Mammary epithelial cell (primary cell): ENCODE measurements at regions of chr17 and their contacts with region 1.

Region 1: GRCh38 chr17:82292251-82293154 is 19.0 kb upstream of the CSNK1D start:
- DNase-seq: peak; percentile 96
- H3K4me3 ChIP-seq: peak overlapping the region; percentile 70 to 97 (median 71)
- H3K27ac ChIP-seq: peak overlapping the region; percentile 76
- H3K4me1 ChIP-seq: peaks cover 28% of the 10 kb centered on the region
- H3K27me3 ChIP-seq: no peaks in the 10 kb centered on the region
- CTCF ChIP-seq: no peak

Region 2: GRCh38 chr17:81911277-81911961 is 381.1 kb before region 1 on chr17 and contains the start of gene PCYT2:
- CTCF ChIA-PET with region 1: no interaction called
- dilution Hi-C with region 1: loop called (anchors 10 kb)
- in situ Hi-C with region 1: no loop called
- intact Hi-C with region 1: no loop called
- DNase-seq: peak; percentile 85
- H3K4me3 ChIP-seq: peak within 1 kb of the TSS; percentile 81 to 92 (median 83)
- H3K27ac ChIP-seq: peak within 1 kb of the TSS; percentile 19
- H3K4me1 ChIP-seq: peaks cover 12% of the 10 kb centered on the region
- H3K27me3 ChIP-seq: no peaks in the 10 kb centered on the region
- CTCF ChIP-seq: peak in 1 of 2 donors; percentile 2
- total RNA-seq, gene PCYT2: 23.5 to 48.7 TPM

Region 3: DNA sequence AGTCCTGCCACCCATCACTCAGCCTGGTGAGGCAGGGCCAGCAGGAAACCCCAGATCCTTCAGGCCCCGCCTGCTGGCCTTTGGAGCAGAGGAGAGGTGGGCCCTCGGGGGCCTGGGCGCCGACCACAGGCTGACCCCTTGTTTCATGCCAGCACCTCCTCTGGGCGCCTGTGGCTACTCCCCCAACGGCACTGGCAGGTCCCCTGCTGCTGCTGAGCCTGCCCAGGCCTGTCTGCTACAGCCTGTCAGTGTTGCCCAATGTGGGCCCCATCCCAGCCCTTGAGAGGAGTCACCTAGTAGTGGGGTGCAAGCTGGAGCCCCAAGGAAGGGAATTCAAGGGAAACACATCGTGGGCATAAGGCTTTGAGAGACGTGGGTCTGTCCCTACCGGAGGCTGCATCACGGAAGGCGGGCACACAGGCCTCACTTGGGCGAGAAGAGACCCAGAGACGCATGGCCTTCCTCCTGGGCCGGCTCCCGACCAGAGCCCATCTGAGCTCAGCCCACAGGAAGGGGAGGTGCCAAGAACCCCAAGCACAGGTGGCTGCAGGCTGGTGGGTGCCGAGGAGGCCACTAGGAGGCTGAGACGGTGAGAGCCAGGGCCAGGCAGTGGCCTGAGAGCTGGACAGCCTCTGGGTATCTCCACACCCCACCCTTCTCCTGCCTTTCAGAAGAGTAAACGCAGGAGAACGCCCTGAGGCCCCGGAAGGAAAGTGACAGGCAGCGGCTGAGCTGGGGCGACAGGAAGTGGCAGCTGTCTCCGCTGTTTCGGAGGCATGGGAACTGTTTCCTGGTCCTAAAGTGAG is 186.4 kb before region 1 on chr17:
- CTCF ChIA-PET with region 1: no interaction called
- dilution Hi-C with region 1: no loop called
- in situ Hi-C with region 1: no loop called
- intact Hi-C with region 1: loop called (anchors 10 kb)
- DNase-seq: peak; percentile 81
- H3K4me3 ChIP-seq: peak overlapping the region in 2 of 3 experiments; percentile 7 to 9
- H3K27ac ChIP-seq: no peak overlapping the region
- H3K4me1 ChIP-seq: peaks cover 28% of the 10 kb centered on the region
- H3K27me3 ChIP-seq: no peaks in the 10 kb centered on the region
- CTCF ChIP-seq: peak in 1 of 2 donors; percentile 45

Region 4: DNA sequence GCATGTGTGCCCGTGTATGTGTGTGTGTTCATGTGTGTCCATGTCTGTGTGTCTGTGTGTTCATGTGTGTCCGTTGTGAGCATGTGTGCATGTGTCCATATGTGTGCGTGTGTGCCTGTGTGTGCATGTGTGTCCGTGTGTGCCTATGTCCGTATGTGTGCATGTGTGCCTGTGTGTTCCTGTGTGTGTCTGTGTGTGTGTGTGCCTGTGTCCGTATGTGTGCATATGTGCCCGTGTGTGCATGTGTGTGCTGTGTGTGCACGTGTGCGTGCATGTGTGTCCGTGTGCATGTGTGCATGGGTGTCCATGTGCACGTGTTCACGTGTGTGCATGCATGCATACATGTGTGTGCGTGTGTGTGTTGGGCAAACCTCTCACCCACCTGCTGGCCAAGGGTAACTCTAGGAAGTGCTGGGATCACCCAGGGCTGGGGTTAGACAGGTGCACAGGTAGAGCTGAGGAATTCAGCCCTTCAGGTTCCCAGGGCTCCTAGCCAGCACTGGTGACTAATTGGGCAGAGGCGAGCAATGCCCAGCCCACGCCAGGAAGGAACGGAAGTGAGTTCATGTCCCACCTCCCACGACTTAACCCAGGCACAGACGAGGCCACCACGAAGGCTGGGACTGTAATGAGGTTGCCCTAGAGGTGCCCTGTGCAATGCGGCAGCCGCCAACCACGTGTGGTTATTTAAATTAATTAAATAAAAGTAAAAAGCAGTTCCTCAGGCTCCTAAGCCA is 10.8 kb before region 1 on chr17:
- CTCF ChIA-PET with region 1: no interaction called
- dilution Hi-C with region 1: no loop called
- in situ Hi-C with region 1: no loop called
- intact Hi-C with region 1: loop called (anchors 1 kb)
- DNase-seq: peak; percentile 92
- H3K4me3 ChIP-seq: no peak overlapping the region
- H3K27ac ChIP-seq: peak overlapping the region; percentile 65
- H3K4me1 ChIP-seq: peaks cover 42% of the 10 kb centered on the region
- H3K27me3 ChIP-seq: no peaks in the 10 kb centered on the region
- CTCF ChIP-seq: no peak

Region 5: GRCh38 chr17:82351716-82352488 is 59.4 kb after region 1 on chr17:
- CTCF ChIA-PET with region 1: no interaction called
- dilution Hi-C with region 1: loop called (anchors 10 kb)
- in situ Hi-C with region 1: no loop called
- intact Hi-C with region 1: no loop called
- DNase-seq: peak; percentile 64
- H3K4me3 ChIP-seq: no peak overlapping the region
- H3K27ac ChIP-seq: no peak overlapping the region
- H3K4me1 ChIP-seq: peaks cover 20% of the 10 kb centered on the region
- H3K27me3 ChIP-seq: no peaks in the 10 kb centered on the region
- CTCF ChIP-seq: peak; percentile 86 to 94